ENCODE measurements at regions of chr9 and their contacts with region 1.

Region 1: DNA sequence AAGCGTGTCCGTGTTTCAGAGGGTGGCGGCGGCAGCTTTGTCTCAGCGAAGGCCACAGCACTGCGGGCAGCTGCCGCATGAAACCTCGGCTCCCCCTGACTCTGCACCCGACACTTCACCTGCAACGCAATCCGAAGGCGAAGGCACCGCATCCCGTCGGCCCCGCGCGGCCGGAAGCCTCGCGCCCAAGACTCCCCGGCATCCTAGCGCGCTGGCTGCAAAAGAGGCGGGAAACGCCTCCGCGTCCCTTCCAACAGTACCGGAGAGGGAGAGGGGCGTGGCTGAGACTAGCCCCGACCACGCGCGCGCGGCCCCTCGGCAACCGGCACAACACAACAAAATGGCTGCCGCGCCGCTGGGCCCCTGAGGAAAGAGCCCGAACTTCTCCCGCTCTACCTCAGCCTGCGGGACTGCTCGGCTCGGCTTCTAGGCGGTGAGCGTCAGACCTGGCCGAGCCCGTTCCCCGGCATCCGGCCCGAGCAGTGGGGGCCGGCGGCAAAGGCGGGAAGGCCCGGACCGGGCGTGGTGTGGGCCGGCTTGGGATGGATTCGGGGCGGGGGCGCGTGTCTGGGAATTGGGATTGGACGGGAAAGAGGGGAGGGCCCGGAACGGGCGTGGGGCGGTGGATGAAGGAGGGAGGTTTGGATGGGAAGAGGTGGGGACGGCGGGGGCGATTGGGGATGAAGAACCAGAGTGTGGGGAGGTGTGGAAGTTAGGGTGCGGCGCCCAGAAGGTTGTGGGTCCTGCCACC is at the start of gene CNTRL:
- DNase-seq: peak; percentile 98
- ATAC-seq: peak; percentile 89
- H3K4me3 Mint-ChIP-seq: peak within 1 kb of the TSS; percentile 96
- H3K27ac Mint-ChIP-seq: peak within 1 kb of the TSS; percentile 82
- H3K4me1 Mint-ChIP-seq: peaks cover 45% of the 10 kb centered on the region
- H3K27me3 Mint-ChIP-seq: no peaks in the 10 kb centered on the region
- total RNA-seq, gene CNTRL: 64.1 to 72.2 TPM

Region 2: DNA sequence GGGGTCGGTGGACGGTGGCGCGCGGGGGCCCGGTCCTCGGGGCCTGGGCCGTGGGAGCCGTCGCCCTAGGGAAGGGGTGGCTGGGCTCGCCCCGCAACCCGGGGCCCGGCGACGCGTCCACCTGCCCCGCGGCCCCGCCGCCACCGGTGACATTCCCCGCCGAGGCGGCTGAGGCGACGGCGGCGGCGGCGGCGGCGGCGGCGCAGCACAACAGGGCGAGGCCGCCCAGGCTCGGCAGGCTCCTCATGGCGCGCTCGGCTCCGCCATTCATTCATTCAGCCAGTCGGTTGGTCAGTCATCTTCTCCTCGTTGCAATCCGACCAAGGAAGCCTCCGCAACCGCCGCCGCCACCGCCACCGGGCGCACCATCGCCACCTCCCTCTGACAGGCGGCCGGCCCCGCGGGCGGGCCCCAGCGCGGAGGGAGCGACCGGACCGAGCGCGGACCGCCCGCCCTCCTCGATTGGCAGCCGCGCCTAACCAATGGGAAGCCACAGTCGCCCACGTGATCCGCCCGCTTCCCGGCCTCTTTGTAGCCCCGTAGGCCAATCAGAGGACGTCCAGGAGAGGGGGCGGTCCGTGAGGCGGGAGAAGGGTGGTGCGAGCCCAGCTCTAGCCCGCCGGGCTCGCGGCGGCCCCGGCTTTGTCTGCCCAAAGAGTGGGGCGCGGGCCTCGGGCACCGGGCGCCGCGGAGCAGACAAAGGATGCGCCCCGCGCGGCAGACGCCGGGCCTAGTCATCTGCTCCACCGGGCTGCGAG is 360.5 kb before region 1 on chr9 and contains the start of gene MEGF9:
- CTCF ChIA-PET with region 1: no interaction called
- POLR2A ChIA-PET with region 1: no interaction called
- intact Hi-C with region 1: loop called in 1 of 2 experiments (anchors 1 kb)
- DNase-seq: peak; percentile 99
- ATAC-seq: peak; percentile 98
- H3K4me3 Mint-ChIP-seq: peak within 1 kb of the TSS; percentile 84
- H3K27ac Mint-ChIP-seq: peak within 1 kb of the TSS; percentile 74
- H3K4me1 Mint-ChIP-seq: peaks cover 34% of the 10 kb centered on the region
- H3K27me3 Mint-ChIP-seq: no peaks in the 10 kb centered on the region
- total RNA-seq, gene MEGF9: 3.3 to 3.6 TPM

Region 3: DNA sequence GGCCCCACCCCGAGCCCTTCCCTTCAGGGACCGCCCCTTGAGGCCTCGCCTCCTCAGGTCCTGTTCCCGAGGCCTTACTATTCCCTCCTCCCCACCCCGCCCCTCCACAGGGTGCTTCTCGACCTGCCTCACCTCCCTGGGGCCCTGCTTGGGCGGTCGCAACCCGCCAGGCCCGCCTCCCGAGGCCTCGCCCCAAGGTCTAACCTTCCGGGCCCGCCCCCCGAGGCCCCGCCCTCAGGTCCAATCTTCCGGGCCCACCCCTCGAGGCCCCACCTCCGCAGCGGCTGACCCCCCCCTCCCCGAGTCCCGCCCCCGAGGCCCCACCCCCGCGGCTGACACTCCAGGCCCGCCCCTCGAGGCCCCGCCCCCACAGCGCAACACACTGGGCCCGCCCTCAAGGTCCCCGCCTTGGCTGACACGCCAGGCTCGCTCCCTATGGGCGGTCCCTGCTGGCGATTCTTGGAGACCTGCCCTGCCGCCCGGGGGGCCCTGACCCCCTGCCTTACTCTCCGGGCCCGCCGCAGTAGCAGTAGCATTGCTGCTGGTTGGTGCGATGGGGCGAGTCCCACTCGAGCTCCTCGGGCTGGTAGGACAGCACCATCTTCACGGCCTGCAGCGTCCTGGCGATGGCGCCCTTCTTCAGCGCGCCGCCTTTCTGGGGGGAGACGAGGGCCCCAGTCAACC is 206.0 kb before region 1 on chr9:
- CTCF ChIA-PET with region 1: interaction called, 4 read pairs
- POLR2A ChIA-PET with region 1: no interaction called
- intact Hi-C with region 1: loop called (anchors 2 to 10 kb)
- DNase-seq: peak; percentile 99
- ATAC-seq: peak; percentile 94
- H3K4me3 Mint-ChIP-seq: peak overlapping the region; percentile 64
- H3K27ac Mint-ChIP-seq: peak overlapping the region; percentile 70
- H3K4me1 Mint-ChIP-seq: peaks cover 40% of the 10 kb centered on the region
- H3K27me3 Mint-ChIP-seq: no peaks in the 10 kb centered on the region

Region 4: DNA sequence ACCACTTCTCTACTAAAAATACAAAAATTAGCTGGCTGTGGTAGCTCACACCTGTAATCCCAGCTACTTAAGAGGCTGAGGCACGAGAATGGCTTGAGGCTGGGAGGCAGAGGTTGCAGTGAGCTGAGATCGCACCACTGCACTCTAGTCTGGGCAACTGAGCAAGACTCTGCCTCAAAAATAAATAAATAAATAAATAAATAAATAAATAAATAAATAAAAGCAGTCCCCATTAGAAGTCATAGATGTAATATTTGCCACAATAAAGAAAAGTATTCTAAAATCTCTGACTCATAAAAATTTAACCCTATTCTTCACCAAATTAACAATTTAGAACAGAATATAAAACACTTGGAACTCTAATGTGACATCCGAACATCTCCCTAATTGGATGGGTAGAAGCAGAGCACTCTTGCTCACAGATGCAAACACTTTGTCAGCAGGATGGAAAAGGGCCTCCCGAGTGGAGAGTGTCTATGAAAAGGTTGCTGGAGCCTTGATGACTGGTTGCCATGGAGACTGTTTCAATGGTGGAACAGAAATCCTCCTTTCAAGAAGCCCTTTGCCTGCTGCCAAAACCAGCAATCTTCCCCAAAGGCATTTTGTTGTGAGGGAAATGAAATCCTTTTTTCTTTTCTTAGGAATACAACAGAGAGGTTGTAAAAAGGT is 109.3 kb before region 1 on chr9:
- CTCF ChIA-PET with region 1: no interaction called
- POLR2A ChIA-PET with region 1: no interaction called
- intact Hi-C with region 1: no loop called
- DNase-seq: no peak
- ATAC-seq: no peak
- H3K4me3 Mint-ChIP-seq: no peak overlapping the region
- H3K27ac Mint-ChIP-seq: no peak overlapping the region
- H3K4me1 Mint-ChIP-seq: no peaks in the 10 kb centered on the region
- H3K27me3 Mint-ChIP-seq: no peaks in the 10 kb centered on the region

Region 5: GRCh38 chr9:120985810-120986222 is 89.0 kb before region 1 on chr9:
- CTCF ChIA-PET with region 1: interaction called, 7 read pairs
- POLR2A ChIA-PET with region 1: no interaction called
- intact Hi-C with region 1: loop called in 1 of 2 experiments (anchors 2 kb)
- DNase-seq: no peak
- ATAC-seq: no peak
- H3K4me3 Mint-ChIP-seq: no peak overlapping the region
- H3K27ac Mint-ChIP-seq: no peak overlapping the region
- H3K4me1 Mint-ChIP-seq: peaks cover 2% of the 10 kb centered on the region
- H3K27me3 Mint-ChIP-seq: no peaks in the 10 kb centered on the region

Region 6: GRCh38 chr9:120999317-120999716 is 75.5 kb before region 1 on chr9:
- CTCF ChIA-PET with region 1: no interaction called
- POLR2A ChIA-PET with region 1: no interaction called
- intact Hi-C with region 1: no loop called
- DNase-seq: no peak
- ATAC-seq: no peak
- H3K4me3 Mint-ChIP-seq: no peak overlapping the region
- H3K27ac Mint-ChIP-seq: no peak overlapping the region
- H3K4me1 Mint-ChIP-seq: no peaks in the 10 kb centered on the region
- H3K27me3 Mint-ChIP-seq: no peaks in the 10 kb centered on the region

Region 7: GRCh38 chr9:121121582-121122087 is 46.8 kb after region 1 on chr9:
- CTCF ChIA-PET with region 1: interaction called, 4 read pairs
- POLR2A ChIA-PET with region 1: interaction called, 6 read pairs
- intact Hi-C with region 1: loop called (anchors 1 kb)
- DNase-seq: peak; percentile 98
- ATAC-seq: peak; percentile 99
- H3K4me3 Mint-ChIP-seq: peak overlapping the region; percentile 79
- H3K27ac Mint-ChIP-seq: peak overlapping the region; percentile 90
- H3K4me1 Mint-ChIP-seq: peaks cover 51% of the 10 kb centered on the region
- H3K27me3 Mint-ChIP-seq: no peaks in the 10 kb centered on the region

Region 8: GRCh38 chr9:121398374-121398773 is 323.6 kb after region 1 on chr9:
- CTCF ChIA-PET with region 1: no interaction called
- POLR2A ChIA-PET with region 1: no interaction called
- intact Hi-C with region 1: no loop called
- DNase-seq: no peak
- ATAC-seq: no peak
- H3K4me3 Mint-ChIP-seq: no peak overlapping the region
- H3K27ac Mint-ChIP-seq: no peak overlapping the region
- H3K4me1 Mint-ChIP-seq: peaks cover 2% of the 10 kb centered on the region
- H3K27me3 Mint-ChIP-seq: no peaks in the 10 kb centered on the region